HepG2 (cell line): ENCODE measurements at regions of chr14 and their contacts with region 1.

Region 1: DNA sequence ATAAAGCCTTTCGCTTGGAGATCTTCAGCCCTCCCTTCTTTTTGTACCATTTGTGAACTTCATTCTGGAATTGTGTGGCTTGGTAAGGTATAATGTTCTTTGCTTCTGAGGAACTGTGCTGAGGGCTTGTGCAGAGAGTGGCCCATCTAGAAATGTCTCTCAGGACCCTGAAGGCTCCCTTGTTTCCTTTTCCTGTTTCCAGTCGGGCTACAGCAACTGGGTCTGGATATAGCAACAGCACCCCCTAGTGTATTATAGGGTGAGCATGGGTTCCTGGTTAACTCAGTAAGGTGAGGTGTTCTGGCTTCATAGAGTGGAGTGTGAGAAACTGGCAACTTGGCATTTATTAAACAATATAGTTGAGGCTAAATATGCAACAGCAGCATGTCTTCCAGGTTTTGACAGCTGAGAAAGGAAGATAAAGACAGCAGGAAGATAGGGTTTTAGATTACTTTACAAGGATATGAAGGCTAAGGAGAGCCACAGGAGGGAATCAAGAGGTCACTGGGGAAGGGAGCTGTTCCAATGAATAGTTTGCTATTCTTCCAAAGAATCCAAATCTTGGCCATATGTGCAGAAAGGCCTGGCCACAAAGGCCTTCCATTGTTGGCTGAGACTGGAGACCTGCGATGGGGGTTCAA is 49.1 kb upstream of the RNU6-8 start:
- DNase-seq: peak; percentile 89
- ATAC-seq: peak; percentile 88
- H3K4me3 ChIP-seq: no peak overlapping the region
- H3K27ac ChIP-seq: no peak overlapping the region
- H3K4me1 ChIP-seq: no peaks in the 10 kb centered on the region
- H3K27me3 ChIP-seq: no peaks in the 10 kb centered on the region
- CTCF ChIP-seq: peak; percentile 99
- EP300 ChIP-seq: no peak; a peak in 1 of 4 replicates
- POLR2A ChIP-seq: no peak
- RAD21 ChIP-seq: peak; percentile 97

Region 2: GRCh38 chr14:31510222-31510621 is 741.9 kb before region 1 on chr14:
- CTCF ChIA-PET with region 1: interaction called, 24 read pairs
- POLR2A ChIA-PET with region 1: no interaction called
- in situ Hi-C with region 1: loop called (anchors 5 kb)
- intact Hi-C with region 1: loop called (anchors 1 kb)
- DNase-seq: peak; percentile 48
- ATAC-seq: no peak
- H3K4me3 ChIP-seq: no peak overlapping the region
- H3K27ac ChIP-seq: no peak overlapping the region
- H3K4me1 ChIP-seq: 0 out of 2 replicates have a peak, but pooled peaks cover 5% of the 10 kb centered on the region
- H3K27me3 ChIP-seq: peaks cover 0 to 10% of the 10 kb centered on the region in 2 experiments; a peak in 2 of 5 replicates
- CTCF ChIP-seq: peak; percentile 74
- EP300 ChIP-seq: no peak
- POLR2A ChIP-seq: no peak
- RAD21 ChIP-seq: peak; percentile 67

Region 3: GRCh38 chr14:31926123-31926522 is 326.0 kb before region 1 on chr14:
- CTCF ChIA-PET with region 1: interaction called, 44 read pairs
- POLR2A ChIA-PET with region 1: no interaction called
- in situ Hi-C with region 1: loop called (anchors 5 kb)
- intact Hi-C with region 1: loop called (anchors 1 kb)
- DNase-seq: peak; percentile 87
- ATAC-seq: peak; percentile 80
- H3K4me3 ChIP-seq: no peak overlapping the region
- H3K27ac ChIP-seq: no peak overlapping the region
- H3K4me1 ChIP-seq: peaks cover 14% of the 10 kb centered on the region; the same call in 1 of the 2 replicates
- H3K27me3 ChIP-seq: no peaks in the 10 kb centered on the region; a peak in 1 of 5 replicates
- CTCF ChIP-seq: peak; percentile 86
- EP300 ChIP-seq: no peak
- POLR2A ChIP-seq: no peak
- RAD21 ChIP-seq: peak; percentile 85

Region 4: GRCh38 chr14:32009976-32010863 is 241.9 kb before region 1 on chr14:
- CTCF ChIA-PET with region 1: no interaction called
- POLR2A ChIA-PET with region 1: no interaction called
- in situ Hi-C with region 1: no loop called
- intact Hi-C with region 1: loop called (anchors 5 kb)
- DNase-seq: peak; percentile 92
- ATAC-seq: peak; percentile 43
- H3K4me3 ChIP-seq: no peak overlapping the region
- H3K27ac ChIP-seq: no peak overlapping the region
- H3K4me1 ChIP-seq: peaks cover 48% of the 10 kb centered on the region
- H3K27me3 ChIP-seq: peaks cover 0 to 8% of the 10 kb centered on the region in 2 experiments; a peak in 2 of 5 replicates
- CTCF ChIP-seq: no peak
- EP300 ChIP-seq: peak in 1 of 2 experiments; percentile 89; a peak in 2 of 4 replicates
- POLR2A ChIP-seq: no peak
- RAD21 ChIP-seq: no peak

Region 5: DNA sequence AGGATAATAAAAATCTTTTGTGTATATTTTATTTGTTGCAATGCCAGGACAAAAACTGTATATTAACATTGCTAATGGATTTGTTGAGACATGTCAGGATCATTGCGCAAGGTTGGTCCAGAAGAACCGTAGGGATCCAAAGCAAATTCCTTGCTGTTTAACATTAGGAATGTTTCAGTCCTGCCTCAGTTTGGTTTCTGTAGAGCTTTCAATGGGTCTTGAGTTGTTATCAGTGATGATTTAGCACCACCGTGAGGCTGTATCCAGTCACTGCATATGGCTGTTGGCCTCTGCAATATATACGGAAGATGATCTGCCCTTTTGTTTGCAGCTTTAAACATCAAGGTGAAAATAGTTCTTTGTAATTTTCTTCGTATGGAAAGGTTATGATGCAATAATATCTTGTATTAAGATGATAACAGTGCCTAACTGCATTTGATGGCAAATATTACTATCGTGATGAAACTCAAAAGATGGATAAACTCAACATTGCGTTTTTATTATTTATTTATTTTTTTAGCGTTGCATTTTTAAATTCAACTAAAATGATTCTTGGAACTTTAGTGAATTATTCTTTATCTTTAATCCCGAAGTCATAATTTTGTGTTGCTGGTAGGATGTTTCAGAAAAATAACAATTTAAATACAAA is 308.2 kb after region 1 on chr14:
- CTCF ChIA-PET with region 1: interaction called, 10 read pairs
- POLR2A ChIA-PET with region 1: no interaction called
- in situ Hi-C with region 1: loop called (anchors 5 kb)
- intact Hi-C with region 1: loop called (anchors 1 kb)
- DNase-seq: peak; percentile 82
- ATAC-seq: peak; percentile 98
- H3K4me3 ChIP-seq: no peak overlapping the region
- H3K27ac ChIP-seq: no peak overlapping the region
- H3K4me1 ChIP-seq: no peaks in the 10 kb centered on the region
- H3K27me3 ChIP-seq: no peaks in the 10 kb centered on the region
- CTCF ChIP-seq: peak; percentile 98
- EP300 ChIP-seq: no peak
- POLR2A ChIP-seq: no peak
- RAD21 ChIP-seq: peak; percentile 87